Heart right ventricle (tissue), 16 donors: ENCODE measurements at regions of chr1 and their contacts with region 1.

Region 1: DNA sequence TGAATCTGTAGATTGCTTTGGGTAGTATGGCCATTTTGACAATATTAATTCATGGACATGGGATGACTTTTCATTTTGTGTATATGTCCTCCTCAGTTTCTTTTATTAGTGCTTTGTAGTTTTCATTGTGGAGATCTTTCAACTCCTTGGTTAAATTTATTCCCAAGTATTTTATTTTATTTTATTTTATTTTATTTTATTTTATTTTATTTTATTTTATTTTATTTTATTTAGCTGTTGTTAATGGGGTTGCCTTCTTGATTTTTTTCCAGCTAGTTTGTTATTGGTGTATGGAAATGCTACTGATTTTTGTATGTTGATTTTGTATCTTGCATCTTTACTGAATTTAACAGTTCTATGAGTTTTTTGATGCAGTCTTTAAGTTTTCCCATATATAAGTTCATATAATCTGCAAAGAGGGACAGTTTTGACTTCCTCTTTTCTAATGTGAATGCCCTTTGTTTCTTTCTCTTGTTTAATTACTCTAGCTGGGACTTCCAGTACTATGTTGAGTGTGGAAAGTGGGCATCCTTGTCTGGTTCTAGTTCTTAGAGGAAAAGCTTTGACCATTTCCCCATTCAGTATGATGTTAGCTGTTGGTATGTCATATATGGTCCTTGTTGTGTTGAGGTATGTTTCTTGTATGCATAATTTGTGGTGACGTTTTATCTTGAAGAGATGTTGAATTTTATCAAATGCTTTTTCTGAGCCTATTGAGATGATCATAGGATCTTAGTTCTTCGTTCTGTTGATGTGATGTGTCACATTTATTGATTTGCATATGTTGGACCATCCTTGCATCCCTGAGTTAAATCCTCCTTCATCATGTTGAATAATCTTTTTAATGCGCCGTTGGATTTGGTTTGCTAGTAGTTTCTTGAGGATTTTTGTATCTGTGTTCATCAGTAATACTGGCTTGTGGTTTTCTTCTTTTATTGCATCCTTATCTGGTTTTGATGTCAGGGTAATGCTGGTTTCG is 14.3 kb downstream of the CEPT1 start:
- DNase-seq: no peak
- ATAC-seq: no peak
- H3K4me3 ChIP-seq: no peak overlapping the region
- H3K27ac ChIP-seq: no peak overlapping the region
- H3K4me1 ChIP-seq: peaks cover 0 to 19% (median 0%) of the 10 kb centered on the region in 9 donors
- H3K27me3 ChIP-seq: no peaks in the 10 kb centered on the region
- CTCF ChIP-seq: no peak

Region 2: GRCh38 chr1:110936567-110936966 is 217.7 kb before region 1 on chr1:
- intact Hi-C with region 1: no loop called
- DNase-seq: no peak
- ATAC-seq: no peak
- H3K4me3 ChIP-seq: no peak overlapping the region
- H3K27ac ChIP-seq: no peak overlapping the region
- H3K4me1 ChIP-seq: no peaks in the 10 kb centered on the region
- H3K27me3 ChIP-seq: no peaks in the 10 kb centered on the region
- CTCF ChIP-seq: no peak

Region 3: DNA sequence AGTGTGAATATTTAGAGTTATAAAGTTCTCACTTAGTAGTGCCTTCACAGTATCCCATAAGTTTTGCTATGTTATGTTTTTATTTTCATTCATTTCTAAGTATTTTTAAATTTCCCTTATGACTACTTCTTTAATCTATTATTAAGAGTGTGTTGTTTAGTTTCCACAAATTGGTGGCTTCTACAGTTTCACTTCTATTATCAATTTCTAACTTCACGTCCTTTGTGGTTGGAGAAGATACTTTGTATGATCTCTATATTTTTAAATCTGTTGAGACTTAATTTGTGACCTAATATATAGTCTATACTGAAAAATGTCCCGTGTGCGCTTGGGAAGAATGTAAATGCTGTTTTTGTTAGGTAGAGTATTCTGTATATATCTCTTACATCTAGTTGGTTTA is 148.1 kb after region 1 on chr1:
- intact Hi-C with region 1: no loop called
- DNase-seq: no peak
- ATAC-seq: no peak
- H3K4me3 ChIP-seq: no peak overlapping the region
- H3K27ac ChIP-seq: no peak overlapping the region
- H3K4me1 ChIP-seq: no peaks in the 10 kb centered on the region
- H3K27me3 ChIP-seq: no peaks in the 10 kb centered on the region
- CTCF ChIP-seq: no peak

Region 4: GRCh38 chr1:111690306-111690617 is 536.0 kb after region 1 on chr1:
- intact Hi-C with region 1: loop called in 1 of 10 experiments (anchors 5 kb)
- DNase-seq: peak in 1 of 2 donors; percentile 67
- ATAC-seq: peak; percentile 26 to 59 (median 52)
- H3K4me3 ChIP-seq: no peak overlapping the region
- H3K27ac ChIP-seq: peak overlapping the region in 1 of 10 donors; percentile 38
- H3K4me1 ChIP-seq: peaks cover 0 to 30% (median 24%) of the 10 kb centered on the region in 9 donors
- H3K27me3 ChIP-seq: no peaks in the 10 kb centered on the region
- CTCF ChIP-seq: no peak